Activated CD4-positive, alpha-beta T cell treated with anti-CD3 and anti-CD28 coated beads, Interleukin-2, amount 10 ng/mL, durations not matched to agents 24 days and 14 days (primary cell): ENCODE measurements at regions of chr1 and their contacts with region 1.

Region 1: GRCh38 chr1:108570128-108570527 is 10.2 kb downstream of the EEIG2 start:
- DNase-seq: peak; percentile 73
- H3K4me3 Mint-ChIP-seq: no peak overlapping the region
- H3K27ac Mint-ChIP-seq: no peak overlapping the region
- H3K4me1 Mint-ChIP-seq: no peaks in the 10 kb centered on the region
- H3K27me3 Mint-ChIP-seq: no peaks in the 10 kb centered on the region

Region 2: DNA sequence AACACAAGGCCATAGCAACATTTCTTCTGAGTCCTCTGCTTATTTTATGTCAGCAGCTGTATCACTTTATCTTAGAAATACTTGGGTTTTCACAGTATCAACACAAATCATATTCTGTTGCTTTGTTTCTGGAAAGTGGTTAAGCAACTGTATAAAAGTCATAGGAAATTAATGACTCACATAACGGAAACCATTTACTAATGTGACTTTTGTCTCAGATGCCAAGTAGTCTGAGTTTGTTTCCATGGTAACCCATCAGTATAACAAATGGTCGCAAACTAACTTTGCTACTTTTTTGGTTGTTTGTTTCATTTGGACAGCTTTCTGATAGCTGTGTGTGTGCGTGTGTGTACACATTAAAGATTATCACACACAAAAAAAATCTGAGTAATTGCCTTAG is 20.8 kb after region 1 on chr1:
- intact Hi-C with region 1: loop called (anchors 1 kb)
- DNase-seq: peak; percentile 71
- H3K4me3 Mint-ChIP-seq: no peak overlapping the region
- H3K27ac Mint-ChIP-seq: peak overlapping the region; percentile 43
- H3K4me1 Mint-ChIP-seq: peaks cover 19% of the 10 kb centered on the region
- H3K27me3 Mint-ChIP-seq: no peaks in the 10 kb centered on the region